ENCODE measurements at regions of chr12 and their contacts with region 1.

Region 1: GRCh38 chr12:12032851-12033588 is 37.7 kb upstream of the BCL2L14 start:
- DNase-seq: peak in 1 of 2 experiments; percentile 83
- H3K4me3 ChIP-seq: peak overlapping the region; percentile 2 to 53 (median 30); a peak in 5 of 8 replicates
- H3K27ac ChIP-seq: no peak overlapping the region
- H3K4me1 ChIP-seq: peaks cover 0 to 3% (median 1%) of the 10 kb centered on the region in 4 experiments; a peak in 2 of 7 replicates
- H3K27me3 ChIP-seq: no peaks in the 10 kb centered on the region; a peak in 2 of 7 replicates
- CTCF ChIP-seq: peak; percentile 49 to 86 (median 80)
- EP300 ChIP-seq: no peak
- POLR2A ChIP-seq: no peak
- RAD21 ChIP-seq: peak; percentile 95 to 97

Region 2: DNA sequence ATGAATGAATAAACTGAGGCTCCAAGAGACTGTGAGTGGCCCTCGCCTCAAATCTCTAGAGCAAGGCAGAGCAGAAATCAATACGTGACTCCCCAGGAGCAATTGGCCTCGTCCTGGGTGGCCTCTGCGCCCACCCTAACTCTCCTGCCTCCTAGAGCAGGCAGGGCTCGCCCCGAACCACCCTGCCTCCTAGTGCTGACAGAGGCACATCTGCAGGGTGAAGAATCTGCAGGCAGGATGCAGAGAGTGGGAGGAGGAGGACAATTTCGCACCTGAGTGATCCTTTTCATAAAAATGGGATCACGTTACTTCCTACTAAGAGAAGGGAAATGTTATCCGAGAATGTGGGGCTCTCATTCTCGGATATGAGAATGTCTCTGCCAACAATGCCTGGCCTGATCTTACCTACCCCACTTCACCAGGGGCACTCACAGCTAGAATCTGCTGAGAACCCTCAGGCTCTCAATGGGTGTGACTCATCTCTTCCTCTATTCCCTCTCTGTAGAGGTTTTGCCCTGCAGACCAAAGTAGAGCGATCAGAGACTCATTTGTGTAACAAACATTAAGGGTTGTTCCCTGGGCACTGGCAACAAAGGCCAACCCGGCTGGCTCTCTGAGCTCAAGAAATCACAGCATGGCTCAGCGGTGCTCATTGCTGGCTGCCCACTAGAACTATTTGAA is 23.9 kb before region 1 on chr12:
- CTCF ChIA-PET with region 1: interaction called, 31 read pairs
- POLR2A ChIA-PET with region 1: no interaction called
- DNase-seq: peak; percentile 64 to 78
- H3K4me3 ChIP-seq: peak overlapping the region in 2 of 4 experiments; percentile 5 to 7; a peak in 2 of 8 replicates
- H3K27ac ChIP-seq: peak overlapping the region; percentile 44; the same call in 1 of the 2 replicates
- H3K4me1 ChIP-seq: peaks cover 14 to 22% (median 19%) of the 10 kb centered on the region in 4 experiments
- H3K27me3 ChIP-seq: no peaks in the 10 kb centered on the region
- CTCF ChIP-seq: peak; percentile 36 to 58 (median 56)
- EP300 ChIP-seq: peak in 1 of 2 experiments; percentile 66; a peak in 1 of 3 replicates
- POLR2A ChIP-seq: no peak
- RAD21 ChIP-seq: peak; percentile 42 to 57; a peak in 3 of 4 replicates

Region 3: DNA sequence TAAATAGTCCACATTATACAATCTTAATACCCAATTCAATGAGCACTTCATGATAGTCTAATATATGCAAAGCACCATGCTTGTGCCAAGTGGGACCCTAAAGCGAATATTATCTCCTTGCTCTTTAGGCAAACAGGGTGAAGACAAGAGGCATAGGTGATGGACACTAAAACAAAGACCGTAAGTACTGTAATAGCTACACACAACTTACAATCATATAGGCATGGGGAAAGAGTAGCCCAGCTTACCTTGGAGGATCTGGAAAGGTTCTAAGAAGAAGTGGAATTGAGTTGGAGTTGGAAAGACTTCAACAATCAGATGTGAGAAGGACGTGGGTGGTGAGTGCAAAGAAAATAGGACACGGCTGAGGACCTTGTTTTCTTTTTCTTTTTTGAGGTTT is 18.6 kb after region 1 on chr12:
- CTCF ChIA-PET with region 1: interaction called, 19 read pairs
- POLR2A ChIA-PET with region 1: no interaction called
- DNase-seq: no peak
- H3K4me3 ChIP-seq: no peak overlapping the region
- H3K27ac ChIP-seq: no peak overlapping the region
- H3K4me1 ChIP-seq: peaks cover 0 to 10% (median 6%) of the 10 kb centered on the region in 4 experiments; a peak in 5 of 7 replicates
- H3K27me3 ChIP-seq: no peaks in the 10 kb centered on the region
- CTCF ChIP-seq: no peak
- EP300 ChIP-seq: no peak
- POLR2A ChIP-seq: no peak
- RAD21 ChIP-seq: no peak

Region 4: GRCh38 chr12:12056951-12057350 is 23.9 kb after region 1 on chr12:
- CTCF ChIA-PET with region 1: interaction called, 19 read pairs
- POLR2A ChIA-PET with region 1: no interaction called
- DNase-seq: no peak
- H3K4me3 ChIP-seq: peak overlapping the region in 1 of 4 experiments; percentile 22; a peak in 1 of 8 replicates
- H3K27ac ChIP-seq: no peak overlapping the region
- H3K4me1 ChIP-seq: peaks cover 0 to 12% (median 6%) of the 10 kb centered on the region in 4 experiments; a peak in 5 of 7 replicates
- H3K27me3 ChIP-seq: no peaks in the 10 kb centered on the region
- CTCF ChIP-seq: no peak
- EP300 ChIP-seq: peak in 1 of 2 experiments; percentile 25; a peak in 1 of 3 replicates
- POLR2A ChIP-seq: no peak
- RAD21 ChIP-seq: no peak